ENCODE measurements at regions of chr9 and their contacts with region 1.

Region 1: GRCh38 chr9:114906908-114907571 is 23.4 kb downstream of the TNFSF8 start:
- DNase-seq: no peak
- ATAC-seq: peak; percentile 49
- H3K4me3 ChIP-seq: no peak overlapping the region
- H3K27ac ChIP-seq: no peak overlapping the region
- H3K4me1 ChIP-seq: peaks cover 10 to 47% of the 10 kb centered on the region in 2 donors
- H3K27me3 ChIP-seq: no peaks in the 10 kb centered on the region
- CTCF ChIP-seq: peak; percentile 56 to 61

Region 2: DNA sequence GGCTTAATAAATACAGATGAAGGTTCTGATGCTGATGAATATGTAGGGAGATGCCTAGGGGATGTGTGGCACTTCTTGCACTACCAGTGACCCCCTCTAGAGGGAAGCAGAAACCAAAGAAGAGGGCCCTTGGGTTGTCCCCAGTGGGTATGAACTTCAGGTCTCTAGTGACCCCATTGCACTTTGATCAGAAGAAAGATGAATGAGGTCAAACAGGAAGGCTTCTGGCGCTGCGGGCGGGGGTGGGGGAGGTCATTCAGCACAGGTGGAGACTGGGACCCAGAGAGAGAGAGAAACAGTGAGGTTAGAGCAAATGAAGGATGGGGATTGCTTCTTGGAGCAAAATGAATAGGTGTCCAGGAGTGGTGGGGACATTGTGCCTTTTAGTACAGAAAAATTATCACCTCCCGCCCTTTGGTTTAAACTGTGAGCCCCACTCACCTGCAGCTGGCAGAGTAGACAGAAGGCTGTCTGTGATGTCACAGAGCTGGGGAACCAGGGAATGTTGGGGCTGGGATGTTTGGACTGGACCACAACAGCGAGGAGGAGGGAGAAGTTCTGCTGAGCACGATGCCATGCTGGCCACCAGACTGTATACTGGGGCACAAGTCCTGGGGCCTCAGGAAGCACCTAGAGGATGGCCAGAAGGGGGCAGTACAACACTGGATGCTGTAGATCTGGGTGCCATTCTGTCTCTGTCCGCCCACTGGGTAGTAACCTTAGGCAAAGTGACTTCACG is 225.3 kb before region 1 on chr9 and contains the start of gene TEX48:
- intact Hi-C with region 1: loop called in 1 of 2 experiments (anchors 10 kb)
- DNase-seq: peak in 3 of 4 donors; percentile 19 to 67 (median 66)
- ATAC-seq: peak; percentile 95
- H3K4me3 ChIP-seq: no peak within 1 kb of the TSS
- H3K27ac ChIP-seq: no peak within 1 kb of the TSS
- H3K4me1 ChIP-seq: peaks cover 0 to 4% of the 10 kb centered on the region in 2 donors
- H3K27me3 ChIP-seq: no peaks in the 10 kb centered on the region
- CTCF ChIP-seq: peak; percentile 44 to 63
- polyA plus RNA-seq, gene TEX48: 0.35 to 0.41 TPM in 2 of 6 donors, not detected in the others

Region 3: GRCh38 chr9:114738581-114739316 is 168.3 kb before region 1 on chr9:
- intact Hi-C with region 1: loop called in 1 of 2 experiments (anchors 5 kb)
- DNase-seq: peak; percentile 53 to 76 (median 76)
- ATAC-seq: peak; percentile 100
- H3K4me3 ChIP-seq: no peak overlapping the region
- H3K27ac ChIP-seq: no peak overlapping the region
- H3K4me1 ChIP-seq: peaks cover 0 to 7% of the 10 kb centered on the region in 2 donors
- H3K27me3 ChIP-seq: no peaks in the 10 kb centered on the region
- CTCF ChIP-seq: peak; percentile 83 to 84

Region 4: DNA sequence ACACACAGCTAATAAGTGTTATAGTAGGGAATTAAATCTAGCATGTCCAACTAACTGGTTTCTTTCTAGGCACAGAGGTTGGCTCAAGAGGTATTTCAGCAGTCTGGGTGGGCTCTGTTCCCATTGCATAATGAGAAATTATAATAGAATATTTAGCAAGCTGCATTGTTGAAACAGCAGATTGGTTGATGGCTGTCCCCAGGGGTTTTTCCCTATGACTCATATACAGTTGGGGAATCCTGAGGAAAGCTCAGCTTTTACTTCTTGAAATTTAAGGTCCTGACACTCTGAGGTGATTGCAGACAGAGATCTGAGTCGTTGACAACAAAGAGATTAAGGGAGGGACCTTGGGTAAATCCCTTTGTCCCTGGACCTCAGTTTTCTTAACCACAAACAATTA is 61.6 kb after region 1 on chr9:
- intact Hi-C with region 1: no loop called
- DNase-seq: peak in 2 of 4 donors; percentile 26 to 56
- ATAC-seq: peak; percentile 66
- H3K4me3 ChIP-seq: no peak overlapping the region
- H3K27ac ChIP-seq: no peak overlapping the region
- H3K4me1 ChIP-seq: peaks cover 0 to 13% of the 10 kb centered on the region in 2 donors
- H3K27me3 ChIP-seq: no peaks in the 10 kb centered on the region
- CTCF ChIP-seq: no peak